Esophagus muscularis mucosa (tissue), 4 donors: ENCODE measurements at regions of chr17 and their contacts with region 1.

Region 1: DNA sequence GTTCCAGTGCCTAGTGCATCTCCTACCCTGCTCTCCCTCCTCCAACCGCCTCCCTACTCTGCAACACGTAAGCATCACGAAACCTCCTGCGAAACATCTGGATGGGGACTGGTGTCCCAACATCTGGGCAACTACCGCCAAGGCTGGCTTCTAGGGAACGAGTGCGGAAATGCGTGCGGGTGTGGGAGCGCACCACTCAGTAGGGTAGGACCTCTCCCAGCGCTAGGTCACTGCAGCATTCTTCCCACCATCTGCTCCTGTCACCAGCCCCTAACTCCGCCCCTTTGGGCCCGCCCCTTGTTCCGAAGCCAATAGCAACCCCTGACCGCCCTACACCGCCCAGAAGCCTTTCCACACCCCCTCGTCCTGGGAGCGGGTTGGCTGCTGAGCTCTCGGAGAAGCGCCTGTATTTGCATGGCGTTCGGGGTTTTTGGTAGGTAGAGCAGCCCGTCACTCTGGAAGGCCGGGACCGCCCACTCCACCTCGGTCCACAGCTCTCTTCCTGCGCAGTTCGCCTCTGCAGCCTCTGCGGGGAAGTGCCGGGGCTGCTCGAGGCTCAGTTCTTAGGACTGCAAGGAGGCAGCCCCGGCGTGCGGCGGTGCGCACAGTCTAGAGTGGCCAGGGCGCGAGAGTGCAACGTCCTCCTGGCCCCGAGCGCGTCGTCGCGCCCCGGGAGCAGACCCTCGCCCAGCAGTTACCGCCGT is at the start of gene HS3ST3B1:
- DNase-seq: peak; percentile 100
- H3K4me3 ChIP-seq: peak within 1 kb of the TSS; percentile 60 to 66 (median 63)
- H3K27ac ChIP-seq: peak within 1 kb of the TSS; percentile 65 to 82 (median 68)
- H3K4me1 ChIP-seq: peaks cover 56 to 82% (median 74%) of the 10 kb centered on the region in 4 donors
- H3K27me3 ChIP-seq: peaks cover 0 to 100% (median 73%) of the 10 kb centered on the region in 4 donors
- CTCF ChIP-seq: peak in 1 of 3 experiments; percentile 21
- EP300 ChIP-seq: no peak
- POLR2A ChIP-seq: peak; percentile 27
- total RNA-seq, gene HS3ST3B1: 2.5 to 5.5 (median 3.3) TPM

Region 2: GRCh38 chr17:13594762-13595598 is 705.7 kb before region 1 on chr17:
- intact Hi-C with region 1: loop called (anchors 2 kb)
- DNase-seq: no peak
- H3K4me3 ChIP-seq: no peak overlapping the region
- H3K27ac ChIP-seq: peak overlapping the region in 3 of 4 donors; percentile 1 to 37 (median 35)
- H3K4me1 ChIP-seq: peaks cover 0 to 4% (median 0%) of the 10 kb centered on the region in 4 donors
- H3K27me3 ChIP-seq: peaks cover 0 to 50% (median 5%) of the 10 kb centered on the region in 4 donors
- CTCF ChIP-seq: peak; percentile 80 to 92 (median 91)
- EP300 ChIP-seq: no peak
- POLR2A ChIP-seq: no peak

Region 3: DNA sequence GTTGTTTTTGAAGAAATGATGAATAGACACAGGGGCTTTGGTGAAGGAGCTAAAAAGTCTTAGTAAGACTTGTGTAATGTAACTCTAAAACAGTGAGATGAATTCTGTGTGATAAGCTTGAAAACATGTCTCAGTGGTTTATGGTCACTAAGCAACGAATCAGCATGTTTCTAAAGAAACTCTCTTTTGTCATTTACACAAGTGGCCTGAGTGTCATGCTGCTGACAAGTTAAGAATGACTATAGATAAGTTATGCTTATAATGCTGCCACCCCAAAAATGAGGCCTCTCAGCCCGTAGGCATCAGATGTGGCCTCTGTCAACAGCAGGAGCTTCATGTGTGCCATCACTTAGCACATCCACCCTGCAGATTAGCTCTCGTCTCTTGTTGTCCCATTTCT is 222.7 kb before region 1 on chr17:
- intact Hi-C with region 1: loop called (anchors 5 kb)
- DNase-seq: no peak
- H3K4me3 ChIP-seq: no peak overlapping the region
- H3K27ac ChIP-seq: no peak overlapping the region
- H3K4me1 ChIP-seq: peaks cover 6 to 12% (median 10%) of the 10 kb centered on the region in 4 donors
- H3K27me3 ChIP-seq: no peaks in the 10 kb centered on the region
- CTCF ChIP-seq: no peak
- EP300 ChIP-seq: no peak
- POLR2A ChIP-seq: no peak

Region 4: GRCh38 chr17:14396547-14396946 is 95.8 kb after region 1 on chr17:
- intact Hi-C with region 1: no loop called
- DNase-seq: no peak
- H3K4me3 ChIP-seq: no peak overlapping the region
- H3K27ac ChIP-seq: no peak overlapping the region
- H3K4me1 ChIP-seq: no peaks in the 10 kb centered on the region
- H3K27me3 ChIP-seq: no peaks in the 10 kb centered on the region
- CTCF ChIP-seq: no peak
- EP300 ChIP-seq: no peak
- POLR2A ChIP-seq: no peak

Region 5: GRCh38 chr17:14935139-14935841 is 634.6 kb after region 1 on chr17:
- intact Hi-C with region 1: loop called (anchors 10 kb)
- DNase-seq: peak; percentile 57
- H3K4me3 ChIP-seq: no peak overlapping the region
- H3K27ac ChIP-seq: no peak overlapping the region
- H3K4me1 ChIP-seq: no peaks in the 10 kb centered on the region
- H3K27me3 ChIP-seq: peaks cover 0 to 4% (median 0%) of the 10 kb centered on the region in 4 donors
- CTCF ChIP-seq: no peak
- EP300 ChIP-seq: no peak
- POLR2A ChIP-seq: no peak